ENCODE measurements at regions of chr1 and their contacts with region 1.

Region 1: GRCh38 chr1:8560611-8561544 is 243.0 kb downstream of the SLC45A1 start:
- DNase-seq: peak in 5 of 9 experiments; percentile 28 to 70 (median 31)
- ATAC-seq: peak; percentile 94
- H3K4me3 ChIP-seq: no peak overlapping the region
- H3K4me3 Mint-ChIP-seq: no peak overlapping the region
- H3K27ac ChIP-seq: no peak overlapping the region
- H3K27ac Mint-ChIP-seq: no peak overlapping the region
- H3K4me1 ChIP-seq: no peaks in the 10 kb centered on the region
- H3K4me1 Mint-ChIP-seq: peaks cover 5% of the 10 kb centered on the region
- H3K27me3 ChIP-seq: no peaks in the 10 kb centered on the region
- H3K27me3 Mint-ChIP-seq: no peaks in the 10 kb centered on the region
- CTCF ChIP-seq: peak; percentile 99

Region 2: DNA sequence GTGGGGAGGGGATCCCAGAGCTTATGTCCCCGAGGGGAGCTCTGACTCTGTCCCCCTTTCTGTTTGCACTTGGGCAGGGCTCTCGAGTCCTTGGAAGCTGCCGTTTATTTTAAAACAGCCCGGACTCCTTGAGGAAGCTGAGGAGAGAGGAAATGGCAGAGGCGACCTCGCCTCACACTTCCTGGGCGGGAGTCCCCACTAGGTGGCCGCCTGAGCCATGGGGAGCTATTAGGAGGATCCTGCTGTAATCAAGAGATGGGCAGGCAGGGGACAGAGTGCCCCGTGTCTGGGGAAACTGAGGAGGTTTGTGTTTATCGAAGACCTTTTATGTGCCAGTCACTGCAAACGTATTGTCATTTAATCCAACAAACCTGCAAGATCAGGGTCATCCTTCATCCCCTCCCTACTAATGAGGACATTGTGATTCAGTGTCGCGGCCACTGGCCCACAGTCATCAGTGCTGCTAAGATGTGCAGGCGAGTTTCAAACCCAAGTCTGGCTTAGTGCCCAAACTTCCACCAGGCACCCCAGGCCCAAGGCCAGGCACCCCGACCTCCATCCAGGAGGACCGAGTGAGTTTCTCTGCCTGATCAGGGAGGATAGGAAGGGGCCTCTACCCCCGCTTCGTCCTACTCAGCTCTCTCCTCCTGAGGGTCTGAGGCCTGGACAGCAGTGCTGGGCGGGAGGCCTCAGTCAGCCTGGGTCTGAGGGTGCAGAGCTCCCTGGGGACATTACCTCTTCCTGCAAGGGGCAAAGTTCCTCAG is 1106.6 kb before region 1 on chr1:
- CTCF ChIA-PET with region 1: no interaction called
- POLR2A ChIA-PET with region 1: no interaction called
- intact Hi-C with region 1: no loop called
- DNase-seq: no peak
- ATAC-seq: no peak
- H3K4me3 ChIP-seq: no peak overlapping the region
- H3K4me3 Mint-ChIP-seq: no peak overlapping the region
- H3K27ac ChIP-seq: no peak overlapping the region
- H3K27ac Mint-ChIP-seq: no peak overlapping the region
- H3K4me1 ChIP-seq: no peaks in the 10 kb centered on the region
- H3K4me1 Mint-ChIP-seq: no peaks in the 10 kb centered on the region
- H3K27me3 ChIP-seq: no peaks in the 10 kb centered on the region
- H3K27me3 Mint-ChIP-seq: no peaks in the 10 kb centered on the region
- CTCF ChIP-seq: no peak

Region 3: GRCh38 chr1:8486047-8486446 is 74.8 kb before region 1 on chr1:
- CTCF ChIA-PET with region 1: no interaction called
- POLR2A ChIA-PET with region 1: no interaction called
- intact Hi-C with region 1: no loop called
- DNase-seq: no peak
- ATAC-seq: no peak
- H3K4me3 ChIP-seq: no peak overlapping the region
- H3K4me3 Mint-ChIP-seq: no peak overlapping the region
- H3K27ac ChIP-seq: no peak overlapping the region
- H3K27ac Mint-ChIP-seq: no peak overlapping the region
- H3K4me1 ChIP-seq: no peaks in the 10 kb centered on the region
- H3K4me1 Mint-ChIP-seq: peaks cover 4% of the 10 kb centered on the region
- H3K27me3 ChIP-seq: no peaks in the 10 kb centered on the region
- H3K27me3 Mint-ChIP-seq: no peaks in the 10 kb centered on the region
- CTCF ChIP-seq: no peak

Region 4: DNA sequence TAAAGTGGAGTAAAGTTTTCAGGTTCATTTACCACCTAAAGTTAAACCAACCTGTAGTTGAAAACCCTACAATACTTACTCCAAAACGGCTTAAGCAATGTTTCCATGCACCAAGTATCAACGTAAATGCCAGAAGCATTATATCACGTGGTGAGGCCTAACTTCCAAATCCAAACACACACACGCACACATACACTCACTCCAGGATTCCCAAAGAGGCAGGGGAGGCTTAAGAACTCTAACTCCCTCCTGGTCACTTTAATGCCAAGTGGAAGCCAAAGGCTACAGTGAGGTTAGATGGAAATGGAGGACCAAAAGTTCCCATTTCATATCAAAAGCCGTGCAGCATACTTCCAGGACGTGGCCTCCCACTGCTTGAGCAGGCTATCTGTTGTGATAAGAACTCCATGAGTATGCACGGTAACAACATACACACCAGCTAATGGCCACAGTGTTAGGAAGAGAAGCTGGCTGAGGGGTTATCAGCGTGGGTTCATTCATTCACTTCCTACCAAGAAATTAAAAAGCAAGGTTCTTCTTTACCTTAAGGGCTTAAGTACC is 18.8 kb before region 1 on chr1:
- CTCF ChIA-PET with region 1: no interaction called
- POLR2A ChIA-PET with region 1: no interaction called
- intact Hi-C with region 1: no loop called
- DNase-seq: no peak
- ATAC-seq: no peak
- H3K4me3 ChIP-seq: no peak overlapping the region
- H3K4me3 Mint-ChIP-seq: no peak overlapping the region
- H3K27ac ChIP-seq: no peak overlapping the region
- H3K27ac Mint-ChIP-seq: no peak overlapping the region
- H3K4me1 ChIP-seq: no peaks in the 10 kb centered on the region
- H3K4me1 Mint-ChIP-seq: peaks cover 12% of the 10 kb centered on the region
- H3K27me3 ChIP-seq: no peaks in the 10 kb centered on the region
- H3K27me3 Mint-ChIP-seq: no peaks in the 10 kb centered on the region
- CTCF ChIP-seq: no peak

Region 5: GRCh38 chr1:8571200-8571984 is 10.5 kb after region 1 on chr1:
- CTCF ChIA-PET with region 1: interaction called, 14 read pairs
- POLR2A ChIA-PET with region 1: interaction called, 3 read pairs
- intact Hi-C with region 1: no loop called
- DNase-seq: no peak
- ATAC-seq: no peak
- H3K4me3 ChIP-seq: no peak overlapping the region
- H3K4me3 Mint-ChIP-seq: no peak overlapping the region
- H3K27ac ChIP-seq: no peak overlapping the region
- H3K27ac Mint-ChIP-seq: no peak overlapping the region
- H3K4me1 ChIP-seq: no peaks in the 10 kb centered on the region
- H3K4me1 Mint-ChIP-seq: peaks cover 7% of the 10 kb centered on the region
- H3K27me3 ChIP-seq: no peaks in the 10 kb centered on the region
- H3K27me3 Mint-ChIP-seq: no peaks in the 10 kb centered on the region
- CTCF ChIP-seq: no peak

Region 6: GRCh38 chr1:8580566-8580965 is 19.7 kb after region 1 on chr1:
- CTCF ChIA-PET with region 1: interaction called, 14 read pairs
- POLR2A ChIA-PET with region 1: no interaction called
- intact Hi-C with region 1: no loop called
- DNase-seq: no peak
- ATAC-seq: no peak
- H3K4me3 ChIP-seq: no peak overlapping the region
- H3K4me3 Mint-ChIP-seq: no peak overlapping the region
- H3K27ac ChIP-seq: no peak overlapping the region
- H3K27ac Mint-ChIP-seq: no peak overlapping the region
- H3K4me1 ChIP-seq: no peaks in the 10 kb centered on the region
- H3K4me1 Mint-ChIP-seq: no peaks in the 10 kb centered on the region
- H3K27me3 ChIP-seq: no peaks in the 10 kb centered on the region
- H3K27me3 Mint-ChIP-seq: no peaks in the 10 kb centered on the region
- CTCF ChIP-seq: no peak

Region 7: DNA sequence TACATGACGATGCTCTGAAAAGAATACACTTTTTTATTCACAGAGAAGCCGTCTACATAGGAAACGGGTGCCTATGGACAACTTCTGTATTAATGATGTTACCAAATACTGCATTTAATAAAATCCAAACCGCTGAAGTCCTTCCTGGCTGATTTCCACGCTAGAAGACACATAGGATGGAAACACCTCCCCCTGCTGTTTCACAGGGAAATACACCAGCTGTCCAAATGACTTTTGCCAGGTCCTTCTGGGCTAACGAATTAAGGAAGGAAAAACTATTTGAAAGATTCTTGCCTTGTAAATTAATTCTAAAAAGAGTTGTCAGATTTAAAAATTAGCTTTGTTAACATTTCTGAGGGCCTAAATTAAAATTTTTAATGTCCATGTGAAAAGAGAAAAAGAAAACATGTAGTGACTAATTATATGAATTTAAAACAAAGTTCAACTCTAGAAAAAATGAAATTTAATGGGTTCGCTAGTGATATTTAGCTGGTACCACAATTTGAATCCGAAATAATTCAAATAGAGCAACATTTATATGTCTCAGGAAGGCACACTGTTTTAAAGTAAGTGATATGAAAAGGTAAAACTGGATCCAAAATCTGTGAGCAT is 110.5 kb after region 1 on chr1:
- CTCF ChIA-PET with region 1: interaction called, 22 read pairs
- POLR2A ChIA-PET with region 1: interaction called, 3 read pairs
- intact Hi-C with region 1: loop called (anchors 1 kb)
- DNase-seq: peak in 3 of 9 experiments; percentile 15 to 65 (median 50)
- ATAC-seq: no peak
- H3K4me3 ChIP-seq: no peak overlapping the region
- H3K4me3 Mint-ChIP-seq: no peak overlapping the region
- H3K27ac ChIP-seq: no peak overlapping the region
- H3K27ac Mint-ChIP-seq: no peak overlapping the region
- H3K4me1 ChIP-seq: peaks cover 21% of the 10 kb centered on the region
- H3K4me1 Mint-ChIP-seq: peaks cover 33% of the 10 kb centered on the region
- H3K27me3 ChIP-seq: no peaks in the 10 kb centered on the region
- H3K27me3 Mint-ChIP-seq: no peaks in the 10 kb centered on the region
- CTCF ChIP-seq: peak; percentile 70

Region 8: GRCh38 chr1:8702850-8703810 is 142.3 kb after region 1 on chr1:
- CTCF ChIA-PET with region 1: interaction called, 10 read pairs
- POLR2A ChIA-PET with region 1: no interaction called
- intact Hi-C with region 1: no loop called
- DNase-seq: peak; percentile 19 to 73 (median 43)
- ATAC-seq: no peak
- H3K4me3 ChIP-seq: peak overlapping the region; percentile 18 to 21
- H3K4me3 Mint-ChIP-seq: peak overlapping the region; percentile 86
- H3K27ac ChIP-seq: no peak overlapping the region
- H3K27ac Mint-ChIP-seq: no peak overlapping the region
- H3K4me1 ChIP-seq: peaks cover 32% of the 10 kb centered on the region
- H3K4me1 Mint-ChIP-seq: peaks cover 29% of the 10 kb centered on the region
- H3K27me3 ChIP-seq: peaks cover 6 to 20% of the 10 kb centered on the region in 2 experiments
- H3K27me3 Mint-ChIP-seq: peaks cover 52% of the 10 kb centered on the region
- CTCF ChIP-seq: no peak

Measured in CD8-positive, alpha-beta T cell (primary cell).